Activated B cell treated with CpG ODN at 0.5 μM for 24 hours (primary cell): ENCODE measurements at regions of chr1 and their contacts with region 1.

Region 1: DNA sequence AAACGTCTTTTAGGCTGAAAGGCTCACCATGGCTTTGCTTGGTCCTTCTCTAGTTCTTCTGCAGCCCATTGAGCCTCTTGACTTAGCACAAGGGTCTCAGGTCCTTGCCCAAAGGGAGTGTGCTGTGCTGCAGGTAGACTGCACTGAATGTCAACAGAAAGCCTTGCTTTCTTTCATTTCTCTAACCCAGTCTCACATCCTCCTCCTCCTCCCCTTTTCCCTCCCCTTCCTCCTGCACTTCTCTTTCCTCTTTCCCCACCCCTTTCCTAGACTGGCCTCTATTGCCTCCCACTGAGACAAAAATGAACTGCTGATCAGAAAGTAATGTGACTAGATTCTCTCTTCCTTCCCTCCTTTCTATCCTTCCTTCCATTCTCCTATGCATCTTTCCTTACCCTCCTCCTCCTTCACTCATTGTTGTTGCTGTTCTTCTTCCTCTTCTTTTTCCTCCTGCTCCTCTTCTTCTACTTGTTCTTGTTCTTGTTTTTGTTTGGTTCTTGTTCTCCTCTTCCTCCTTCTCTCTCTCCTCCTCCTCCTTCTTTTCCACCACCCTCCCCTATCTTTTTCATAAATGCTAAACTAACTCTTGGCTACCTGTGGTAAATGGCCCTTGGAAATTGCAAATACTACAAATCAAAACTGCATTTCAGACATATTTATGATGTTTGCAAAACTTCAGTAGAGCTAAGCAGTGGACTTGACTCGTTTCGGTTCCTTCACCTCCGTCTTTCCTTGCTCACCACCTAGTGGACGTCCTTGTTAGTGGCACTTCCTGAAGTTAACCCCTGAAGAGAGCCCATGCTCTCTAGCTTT is at the start of gene SELL:
- DNase-seq: no peak
- ATAC-seq: peak; percentile 78
- H3K4me3 Mint-ChIP-seq: peak within 1 kb of the TSS; percentile 90
- H3K27ac Mint-ChIP-seq: peak within 1 kb of the TSS; percentile 97
- H3K4me1 Mint-ChIP-seq: peaks cover 41% of the 10 kb centered on the region
- H3K27me3 Mint-ChIP-seq: no peaks in the 10 kb centered on the region
- CTCF ChIP-seq: peak; percentile 77
- total RNA-seq, gene SELL: 151 and 156 TPM in 2 replicates

Region 2: DNA sequence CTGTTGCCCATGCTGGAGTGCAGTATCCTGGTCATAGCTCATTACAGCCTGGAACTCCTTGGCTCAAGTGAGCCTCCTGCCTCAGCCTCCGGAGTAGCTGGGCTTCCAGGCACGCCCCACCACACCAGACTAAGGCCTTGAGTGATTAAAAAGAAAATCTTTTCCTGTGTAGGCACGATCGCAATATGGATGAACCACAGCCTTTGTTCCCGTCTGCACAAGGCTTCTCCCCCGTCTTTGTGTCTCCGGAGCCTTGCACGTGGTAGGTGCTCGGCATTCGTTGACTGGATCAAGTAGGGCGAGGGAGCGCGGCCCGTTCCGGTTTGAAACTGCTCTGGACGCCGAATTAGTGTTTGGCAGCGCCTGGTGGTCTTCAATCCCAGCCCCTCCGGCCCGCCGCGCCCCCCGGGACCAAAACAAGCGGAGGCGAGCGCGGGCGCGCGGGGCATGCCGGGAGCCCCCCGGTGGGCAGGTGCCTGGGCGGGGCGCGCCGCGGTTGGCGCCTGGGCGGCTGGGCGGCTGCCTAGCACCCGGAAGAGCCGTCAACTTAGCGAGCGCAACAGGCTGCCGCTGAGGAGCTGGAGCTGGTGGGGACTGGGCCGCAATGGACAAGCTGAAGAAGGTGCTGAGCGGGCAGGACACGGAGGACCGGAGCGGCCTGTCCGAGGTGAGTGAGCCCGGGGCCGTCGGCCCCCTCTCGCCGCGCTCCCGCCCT is 1486.0 kb before region 1 on chr1 and contains the start of gene SFT2D2:
- CTCF ChIA-PET with region 1: no interaction called
- POLR2A ChIA-PET with region 1: no interaction called
- intact Hi-C with region 1: loop called (anchors 5 kb)
- DNase-seq: peak; percentile 85
- ATAC-seq: peak; percentile 92
- H3K4me3 Mint-ChIP-seq: peak within 1 kb of the TSS; percentile 96
- H3K27ac Mint-ChIP-seq: peak within 1 kb of the TSS; percentile 93
- H3K4me1 Mint-ChIP-seq: peaks cover 47% of the 10 kb centered on the region
- H3K27me3 Mint-ChIP-seq: no peaks in the 10 kb centered on the region
- CTCF ChIP-seq: no peak
- total RNA-seq, gene SFT2D2: 62.7 and 63.4 TPM in 2 replicates

Region 3: GRCh38 chr1:169367486-169368405 is 343.9 kb before region 1 on chr1 and contains the starts of genes BLZF1 and NME7:
- CTCF ChIA-PET with region 1: no interaction called
- POLR2A ChIA-PET with region 1: no interaction called
- intact Hi-C with region 1: loop called (anchors 5 kb)
- DNase-seq: peak; percentile 94
- ATAC-seq: peak; percentile 99
- H3K4me3 Mint-ChIP-seq: peak within 1 kb of the TSS; percentile 56
- H3K27ac Mint-ChIP-seq: no peak within 1 kb of the TSS
- H3K4me1 Mint-ChIP-seq: peaks cover 18% of the 10 kb centered on the region
- H3K27me3 Mint-ChIP-seq: no peaks in the 10 kb centered on the region
- CTCF ChIP-seq: no peak
- total RNA-seq, gene BLZF1: 13.8 and 14.3 TPM in 2 replicates
- total RNA-seq, gene NME7: 14.5 and 16.0 TPM in 2 replicates

Region 4: DNA sequence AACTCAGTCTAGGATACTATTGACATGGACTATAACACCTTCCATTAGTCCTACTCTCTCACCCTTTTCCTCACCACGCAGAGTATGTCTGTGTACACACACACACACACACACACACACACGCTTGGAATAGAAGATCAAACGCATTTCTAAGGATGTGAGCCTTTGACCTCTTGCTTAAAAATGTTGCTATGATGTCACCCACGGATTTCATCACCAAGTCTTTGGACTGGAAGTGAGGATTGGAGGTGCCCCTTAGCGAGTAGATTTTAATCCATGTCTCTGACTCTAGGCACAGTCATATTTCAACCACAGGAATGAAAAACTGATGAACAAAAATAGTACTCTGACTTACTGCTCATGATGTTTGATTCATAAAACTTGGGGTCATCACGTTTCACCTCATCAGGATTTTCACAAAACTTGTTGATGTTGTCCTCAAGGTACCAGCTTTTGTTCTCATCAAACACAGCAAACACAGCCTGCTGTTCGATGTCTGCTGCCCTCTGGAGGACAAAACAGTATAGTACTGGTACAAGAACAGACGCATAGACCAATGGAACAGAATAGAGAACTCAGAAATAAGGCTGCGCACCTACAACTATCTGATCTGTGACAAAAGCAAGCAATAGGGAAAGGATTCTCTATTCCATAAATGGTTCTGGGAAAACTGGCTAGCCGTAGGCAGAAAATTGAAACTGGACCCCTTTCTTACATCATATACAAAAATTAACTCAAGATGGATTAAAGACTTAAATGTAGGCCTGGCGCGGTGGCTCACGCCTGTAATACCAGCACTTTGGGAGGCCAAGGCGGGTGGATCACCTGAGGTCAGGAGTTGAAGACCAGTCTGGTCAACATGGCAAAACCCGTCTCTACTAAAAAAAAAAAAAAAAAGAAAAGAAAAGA is 165.3 kb before region 1 on chr1:
- CTCF ChIA-PET with region 1: interaction called, 42 read pairs
- POLR2A ChIA-PET with region 1: interaction called, 3 read pairs
- intact Hi-C with region 1: loop called (anchors 1 kb)
- DNase-seq: no peak
- ATAC-seq: peak; percentile 78
- H3K4me3 Mint-ChIP-seq: no peak overlapping the region
- H3K27ac Mint-ChIP-seq: no peak overlapping the region
- H3K4me1 Mint-ChIP-seq: no peaks in the 10 kb centered on the region
- H3K27me3 Mint-ChIP-seq: peaks cover 3% of the 10 kb centered on the region
- CTCF ChIP-seq: peak; percentile 73

Region 5: GRCh38 chr1:169601093-169601881 is 110.4 kb before region 1 on chr1:
- CTCF ChIA-PET with region 1: interaction called, 312 read pairs
- POLR2A ChIA-PET with region 1: interaction called, 34 read pairs
- intact Hi-C with region 1: loop called (anchors 1 kb)
- DNase-seq: no peak
- ATAC-seq: peak; percentile 53
- H3K4me3 Mint-ChIP-seq: peak overlapping the region; percentile 42
- H3K27ac Mint-ChIP-seq: peak overlapping the region; percentile 71
- H3K4me1 Mint-ChIP-seq: peaks cover 44% of the 10 kb centered on the region
- H3K27me3 Mint-ChIP-seq: no peaks in the 10 kb centered on the region
- CTCF ChIP-seq: no peak

Region 6: DNA sequence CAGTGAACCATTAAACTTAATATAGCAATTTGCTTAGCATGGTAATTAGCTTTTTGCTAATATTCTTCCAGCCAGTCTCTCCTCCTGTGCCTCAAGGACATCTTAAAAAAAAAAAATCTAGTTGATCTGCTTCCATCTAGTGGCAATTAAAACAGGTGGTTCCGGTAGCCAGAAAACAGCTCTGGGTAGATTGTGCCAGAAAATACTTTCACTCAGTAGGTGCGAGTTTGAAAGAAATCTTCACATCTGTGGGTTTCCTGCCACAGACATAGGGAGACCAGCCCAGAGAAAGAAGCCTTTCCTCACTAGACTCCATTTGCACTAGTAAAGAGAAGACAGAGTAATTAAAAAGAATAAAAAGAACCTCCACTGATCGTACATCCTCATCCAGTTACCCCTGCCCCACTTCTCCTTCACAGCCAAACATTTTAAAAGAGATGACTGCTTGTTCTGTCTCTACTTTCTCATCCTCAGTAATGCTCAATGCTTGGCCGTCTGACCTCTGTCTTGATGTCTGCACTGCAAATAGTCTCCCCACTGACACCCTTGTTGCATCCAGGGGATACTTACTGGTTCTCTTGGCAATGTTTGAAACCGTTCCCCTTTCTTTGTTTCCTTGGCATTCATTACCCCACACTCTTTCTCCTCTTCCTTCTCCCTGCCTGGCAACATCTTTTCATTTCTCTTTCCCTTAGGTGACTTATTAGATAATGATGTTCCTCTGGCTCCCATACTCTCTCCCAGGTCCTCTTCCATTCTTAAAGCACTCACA is 17.2 kb before region 1 on chr1:
- CTCF ChIA-PET with region 1: interaction called, 39 read pairs
- POLR2A ChIA-PET with region 1: interaction called, 57 read pairs
- intact Hi-C with region 1: loop called (anchors 1 kb)
- DNase-seq: no peak
- ATAC-seq: peak; percentile 9
- H3K4me3 Mint-ChIP-seq: peak overlapping the region; percentile 62
- H3K27ac Mint-ChIP-seq: peak overlapping the region; percentile 90
- H3K4me1 Mint-ChIP-seq: peaks cover 97% of the 10 kb centered on the region
- H3K27me3 Mint-ChIP-seq: no peaks in the 10 kb centered on the region
- CTCF ChIP-seq: no peak

Region 7: GRCh38 chr1:169809370-169810095 is 97.9 kb after region 1 on chr1:
- CTCF ChIA-PET with region 1: interaction called, 13 read pairs
- POLR2A ChIA-PET with region 1: no interaction called
- intact Hi-C with region 1: loop called (anchors 1 kb)
- DNase-seq: no peak
- ATAC-seq: peak; percentile 37
- H3K4me3 Mint-ChIP-seq: no peak overlapping the region
- H3K27ac Mint-ChIP-seq: no peak overlapping the region
- H3K4me1 Mint-ChIP-seq: no peaks in the 10 kb centered on the region
- H3K27me3 Mint-ChIP-seq: no peaks in the 10 kb centered on the region
- CTCF ChIP-seq: peak; percentile 62

Region 8: GRCh38 chr1:170085091-170085490 is 373.4 kb after region 1 on chr1:
- CTCF ChIA-PET with region 1: no interaction called
- POLR2A ChIA-PET with region 1: no interaction called
- intact Hi-C with region 1: no loop called
- DNase-seq: no peak
- ATAC-seq: no peak
- H3K4me3 Mint-ChIP-seq: no peak overlapping the region
- H3K27ac Mint-ChIP-seq: no peak overlapping the region
- H3K4me1 Mint-ChIP-seq: no peaks in the 10 kb centered on the region
- H3K27me3 Mint-ChIP-seq: peaks cover 6% of the 10 kb centered on the region
- CTCF ChIP-seq: no peak